A673 (cell line): ENCODE measurements at regions of chr20 and their contacts with region 1.

Region 1: DNA sequence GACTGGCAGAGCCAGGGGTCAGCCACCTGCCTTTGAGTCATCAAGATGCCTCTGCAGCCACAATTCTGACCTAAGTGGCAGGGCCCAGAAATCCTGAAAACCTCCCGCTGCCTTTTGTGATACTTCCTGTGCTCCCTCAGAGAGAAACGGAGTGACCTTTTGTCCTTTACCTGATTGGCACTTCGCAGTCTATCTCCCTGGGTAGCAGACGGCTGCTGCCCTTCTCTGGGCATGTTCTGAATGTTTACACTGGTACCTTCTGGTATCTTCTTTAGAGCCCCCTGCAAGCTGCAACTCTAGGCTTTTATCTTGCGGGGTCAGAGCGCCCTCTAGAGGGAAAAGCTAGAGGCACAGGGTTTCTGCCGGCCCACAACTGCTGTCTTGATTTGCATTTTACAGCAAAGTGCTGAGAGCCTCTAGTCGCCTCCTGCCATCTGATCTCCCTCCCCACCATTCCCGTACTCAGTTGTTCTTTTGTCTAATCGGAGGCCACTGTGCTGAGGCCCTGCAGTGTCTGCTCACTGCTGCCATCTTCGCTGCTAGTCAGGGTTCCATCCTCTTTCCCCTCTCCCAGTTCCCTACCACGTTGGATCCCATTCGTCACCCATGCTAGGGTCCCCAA is 26.9 kb downstream of the SPATA2 start:
- DNase-seq: peak; percentile 77
- H3K4me3 ChIP-seq: no peak overlapping the region
- H3K27ac ChIP-seq: no peak overlapping the region
- H3K4me1 ChIP-seq: no peaks in the 10 kb centered on the region
- H3K27me3 ChIP-seq: no peaks in the 10 kb centered on the region
- CTCF ChIP-seq: peak; percentile 91

Region 2: GRCh38 chr20:49610701-49611538 is 277.5 kb before region 1 on chr20:
- CTCF ChIA-PET with region 1: interaction called, 4 read pairs
- POLR2A ChIA-PET with region 1: no interaction called
- intact Hi-C with region 1: loop called (anchors 2 kb)
- DNase-seq: peak; percentile 77
- H3K4me3 ChIP-seq: peak overlapping the region; percentile 32
- H3K27ac ChIP-seq: no peak overlapping the region
- H3K4me1 ChIP-seq: no peaks in the 10 kb centered on the region
- H3K27me3 ChIP-seq: no peaks in the 10 kb centered on the region
- CTCF ChIP-seq: peak; percentile 99

Region 3: GRCh38 chr20:49676581-49677291 is 211.7 kb before region 1 on chr20:
- CTCF ChIA-PET with region 1: no interaction called
- POLR2A ChIA-PET with region 1: no interaction called
- intact Hi-C with region 1: no loop called
- DNase-seq: no peak
- H3K4me3 ChIP-seq: no peak overlapping the region
- H3K27ac ChIP-seq: peak overlapping the region; percentile 64
- H3K4me1 ChIP-seq: peaks cover 77% of the 10 kb centered on the region
- H3K27me3 ChIP-seq: no peaks in the 10 kb centered on the region
- CTCF ChIP-seq: no peak

Region 4: DNA sequence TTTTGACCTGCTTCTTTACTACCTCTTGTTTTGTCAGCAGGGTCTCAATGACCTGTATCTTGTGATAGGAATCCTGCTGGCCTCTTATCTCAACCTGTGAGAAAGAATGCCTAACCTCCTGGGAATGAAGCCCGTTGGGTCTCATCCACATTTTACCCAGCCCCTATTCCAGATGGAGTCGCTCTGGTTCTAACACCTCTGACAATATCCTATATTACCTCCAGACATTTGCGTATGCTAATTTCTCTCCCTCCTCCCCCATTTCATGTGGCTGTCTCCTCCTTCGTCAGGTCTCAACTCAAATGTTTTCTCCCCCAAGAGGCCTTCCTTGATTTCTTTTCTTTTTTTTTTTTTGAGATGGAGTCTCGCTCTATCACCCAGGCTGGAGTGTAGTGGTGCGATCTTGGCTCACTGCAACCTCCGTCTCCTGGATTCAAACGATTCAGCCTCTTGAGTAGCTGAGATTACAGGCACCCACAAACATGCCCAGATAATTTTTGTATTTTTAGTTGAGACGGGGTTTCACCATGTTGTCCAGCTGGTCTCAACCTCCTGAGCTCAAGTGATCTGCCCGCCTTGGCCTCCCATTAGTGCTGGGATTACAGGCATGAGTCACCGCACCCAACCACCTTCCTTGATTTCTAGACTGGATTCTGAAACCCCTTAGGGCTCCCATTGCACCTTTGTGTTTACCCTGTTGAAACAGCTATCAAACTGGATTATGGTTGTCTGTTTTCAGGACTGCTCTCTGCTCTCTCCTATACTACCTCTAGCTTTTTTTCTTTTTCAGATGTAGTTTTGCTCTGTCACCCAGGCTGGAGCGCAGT is 125.3 kb before region 1 on chr20:
- CTCF ChIA-PET with region 1: no interaction called
- POLR2A ChIA-PET with region 1: no interaction called
- intact Hi-C with region 1: no loop called
- DNase-seq: no peak
- H3K4me3 ChIP-seq: no peak overlapping the region
- H3K27ac ChIP-seq: no peak overlapping the region
- H3K4me1 ChIP-seq: no peaks in the 10 kb centered on the region
- H3K27me3 ChIP-seq: no peaks in the 10 kb centered on the region
- CTCF ChIP-seq: no peak

Region 5: DNA sequence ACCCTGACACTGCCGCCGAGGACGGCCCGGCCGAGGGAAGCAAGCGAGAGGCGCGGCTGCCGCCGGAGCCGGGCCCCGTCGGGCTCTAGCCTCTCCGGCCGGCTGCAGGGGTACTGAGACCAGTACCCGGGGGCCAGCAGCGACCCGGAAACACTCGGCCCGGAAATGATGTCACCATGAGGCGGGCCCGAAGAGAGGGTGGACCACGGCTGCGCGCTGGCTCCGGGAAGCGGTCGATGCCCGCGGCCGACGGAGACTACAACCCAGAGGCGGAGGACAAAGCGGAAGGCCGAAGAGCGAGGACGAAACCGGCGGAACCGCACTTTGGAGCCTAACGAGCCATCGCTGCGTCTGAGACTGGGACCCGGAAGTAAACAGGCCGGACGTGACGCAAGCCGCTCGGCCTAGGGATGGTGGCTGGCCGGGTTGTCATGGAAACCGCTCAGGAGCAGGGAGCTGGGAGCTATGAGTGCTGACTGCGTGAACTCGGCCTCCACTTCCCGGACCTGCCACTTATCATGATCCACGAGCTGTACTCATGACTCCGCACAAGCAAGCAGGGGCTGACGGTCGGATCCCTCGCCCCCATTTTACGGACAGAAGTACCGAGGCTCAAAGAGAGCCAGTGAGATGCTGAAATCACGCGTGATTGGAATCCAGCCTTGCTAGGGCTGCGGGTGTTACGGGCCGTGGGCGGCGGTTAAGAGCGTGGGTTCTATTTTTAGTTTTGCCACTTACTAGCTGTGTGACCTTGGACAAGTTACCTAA is 27.1 kb after region 1 on chr20 and contains the start of gene SPATA2:
- CTCF ChIA-PET with region 1: interaction called, 10 read pairs
- POLR2A ChIA-PET with region 1: no interaction called
- intact Hi-C with region 1: no loop called
- DNase-seq: peak; percentile 97
- H3K4me3 ChIP-seq: peak within 1 kb of the TSS; percentile 90
- H3K27ac ChIP-seq: peak within 1 kb of the TSS; percentile 100
- H3K4me1 ChIP-seq: peaks cover 8% of the 10 kb centered on the region
- H3K27me3 ChIP-seq: no peaks in the 10 kb centered on the region
- CTCF ChIP-seq: no peak
- total RNA-seq, gene SPATA2: 9.2 and 9.7 TPM in 2 replicates

Region 6: DNA sequence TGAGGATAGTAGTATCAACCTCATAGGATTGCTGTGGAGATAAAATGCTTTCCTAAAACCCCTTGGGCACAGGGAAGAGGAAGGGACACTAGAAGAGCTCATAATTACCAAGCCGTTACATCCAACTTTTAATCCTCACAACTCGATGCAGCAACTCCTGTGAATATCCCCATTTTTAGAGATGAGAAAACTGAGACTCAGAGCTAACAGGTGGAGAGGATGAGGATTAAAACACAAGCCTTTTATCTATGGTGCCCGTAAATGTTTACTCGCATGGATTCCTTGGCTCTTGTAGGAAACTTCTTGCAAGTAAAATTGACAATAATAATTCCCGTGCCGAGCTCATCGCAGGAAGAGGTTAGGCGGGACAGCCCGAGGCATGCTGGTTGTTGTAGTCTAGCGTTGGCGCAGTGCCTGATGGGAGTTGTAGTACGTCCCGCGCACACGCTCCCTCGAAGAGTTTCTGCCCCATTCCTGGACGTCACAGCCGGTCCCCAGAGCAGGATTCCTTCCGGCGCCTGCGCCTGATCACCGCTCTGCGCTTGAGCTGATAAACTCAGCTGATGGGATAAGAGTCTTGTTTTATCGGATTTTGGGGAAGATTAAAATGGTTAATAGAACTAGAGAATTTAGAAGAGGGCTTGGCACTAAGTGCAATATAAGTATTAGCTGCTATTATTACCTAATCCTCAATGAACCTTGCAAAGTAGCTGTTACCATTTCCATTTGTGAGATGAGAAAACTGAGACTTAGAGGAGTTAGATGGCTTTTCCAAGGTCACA is 227.3 kb after region 1 on chr20:
- CTCF ChIA-PET with region 1: no interaction called
- POLR2A ChIA-PET with region 1: no interaction called
- intact Hi-C with region 1: no loop called
- DNase-seq: peak; percentile 98
- H3K4me3 ChIP-seq: peak overlapping the region; percentile 51
- H3K27ac ChIP-seq: peak overlapping the region; percentile 64
- H3K4me1 ChIP-seq: peaks cover 23% of the 10 kb centered on the region
- H3K27me3 ChIP-seq: no peaks in the 10 kb centered on the region
- CTCF ChIP-seq: no peak